Activated CD4-positive, alpha-beta T cell treated with anti-CD3 and anti-CD28 coated beads for 36 hours (primary cell): ENCODE measurements at regions of chr1 and their contacts with region 1.

Region 1: DNA sequence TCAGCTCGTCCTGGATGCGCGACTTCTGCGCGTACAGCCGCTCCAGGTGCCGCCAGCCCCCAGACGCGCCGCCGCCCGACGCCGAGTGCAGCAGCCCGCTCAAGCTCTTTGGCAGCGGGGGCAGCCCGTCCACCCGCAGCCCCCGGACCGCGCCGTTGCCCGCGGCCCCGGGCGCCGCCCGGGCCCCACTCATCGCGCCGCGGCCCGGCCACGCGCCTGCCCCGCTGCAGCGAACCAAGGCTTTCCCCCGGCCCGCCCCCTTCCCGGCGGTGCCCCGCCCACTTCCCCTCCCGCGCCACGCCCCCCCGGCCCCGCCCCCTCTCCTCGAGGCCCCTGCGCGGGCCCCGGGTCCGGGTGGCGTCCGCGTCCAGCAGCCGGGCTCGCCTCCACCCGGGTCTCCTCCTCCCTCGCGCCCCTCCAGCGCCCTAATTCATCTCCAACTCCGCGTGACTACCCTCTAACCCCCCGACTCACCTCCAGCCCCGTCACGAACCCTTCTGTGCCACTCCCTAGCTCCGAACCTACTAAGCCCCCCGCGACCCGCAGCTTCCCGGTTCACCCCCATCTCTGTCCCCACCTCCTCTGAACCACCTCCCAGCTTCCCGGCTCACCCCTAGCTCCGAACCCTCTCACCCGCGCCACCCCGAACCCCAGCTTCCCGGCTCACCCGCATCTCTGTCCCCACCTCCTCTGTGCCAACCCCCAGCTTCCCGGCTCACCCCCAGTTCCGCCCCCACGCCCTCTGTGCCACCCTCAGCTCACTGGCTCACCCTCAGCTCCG is at the start of gene FAM89A:
- DNase-seq: peak; percentile 88
- ATAC-seq: peak; percentile 76
- H3K4me3 Mint-ChIP-seq: peak within 1 kb of the TSS; percentile 75
- H3K27ac Mint-ChIP-seq: peak within 1 kb of the TSS; percentile 37
- H3K4me1 Mint-ChIP-seq: peaks cover 35% of the 10 kb centered on the region
- H3K27me3 Mint-ChIP-seq: peaks cover 4% of the 10 kb centered on the region
- total RNA-seq, gene FAM89A: 14.5 to 14.9 TPM

Region 2: DNA sequence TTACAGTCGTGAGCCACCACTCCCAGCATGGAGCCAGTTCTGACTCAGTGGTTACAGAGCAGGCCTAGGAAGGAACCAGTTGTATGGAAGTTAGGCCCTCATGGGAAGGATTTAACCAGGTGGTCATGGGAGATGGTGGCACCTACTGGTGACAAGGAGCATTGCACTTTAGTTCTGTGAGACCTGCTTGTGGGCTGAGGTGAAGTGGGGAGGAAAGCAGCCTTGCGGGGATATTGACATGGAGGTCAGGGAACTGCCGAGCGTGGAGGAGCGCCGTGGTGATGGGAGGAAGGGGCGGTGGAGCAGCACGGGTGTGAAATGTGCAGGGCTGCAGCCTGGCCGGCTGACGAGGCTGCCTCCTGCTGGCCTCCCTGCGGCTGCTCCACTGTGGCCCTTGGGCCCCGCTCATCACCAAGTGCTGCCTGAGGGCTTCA is 872.8 kb before region 1 on chr1:
- CTCF ChIA-PET with region 1: no interaction called
- POLR2A ChIA-PET with region 1: no interaction called
- intact Hi-C with region 1: no loop called
- DNase-seq: peak; percentile 59
- ATAC-seq: peak; percentile 66
- H3K4me3 Mint-ChIP-seq: no peak overlapping the region
- H3K27ac Mint-ChIP-seq: peak overlapping the region; percentile 40
- H3K4me1 Mint-ChIP-seq: peaks cover 43% of the 10 kb centered on the region
- H3K27me3 Mint-ChIP-seq: no peaks in the 10 kb centered on the region

Region 3: GRCh38 chr1:230426246-230427093 is 613.7 kb before region 1 on chr1 and contains the start of gene PGBD5:
- CTCF ChIA-PET with region 1: interaction called, 3 read pairs
- POLR2A ChIA-PET with region 1: no interaction called
- intact Hi-C with region 1: loop called in 1 of 2 experiments (anchors 2 kb)
- DNase-seq: peak; percentile 82
- ATAC-seq: peak; percentile 89
- H3K4me3 Mint-ChIP-seq: peak within 1 kb of the TSS; percentile 60
- H3K27ac Mint-ChIP-seq: no peak within 1 kb of the TSS
- H3K4me1 Mint-ChIP-seq: peaks cover 7% of the 10 kb centered on the region
- H3K27me3 Mint-ChIP-seq: peaks cover 57% of the 10 kb centered on the region
- total RNA-seq, gene PGBD5: 0.11 TPM in 1 of 2 experiments, not detected in the other

Region 4: GRCh38 chr1:230542054-230542453 is 498.2 kb before region 1 on chr1:
- CTCF ChIA-PET with region 1: no interaction called
- POLR2A ChIA-PET with region 1: no interaction called
- intact Hi-C with region 1: no loop called
- DNase-seq: peak; percentile 49
- ATAC-seq: peak; percentile 90
- H3K4me3 Mint-ChIP-seq: no peak overlapping the region
- H3K27ac Mint-ChIP-seq: no peak overlapping the region
- H3K4me1 Mint-ChIP-seq: peaks cover 2% of the 10 kb centered on the region
- H3K27me3 Mint-ChIP-seq: peaks cover 17% of the 10 kb centered on the region

Region 5: DNA sequence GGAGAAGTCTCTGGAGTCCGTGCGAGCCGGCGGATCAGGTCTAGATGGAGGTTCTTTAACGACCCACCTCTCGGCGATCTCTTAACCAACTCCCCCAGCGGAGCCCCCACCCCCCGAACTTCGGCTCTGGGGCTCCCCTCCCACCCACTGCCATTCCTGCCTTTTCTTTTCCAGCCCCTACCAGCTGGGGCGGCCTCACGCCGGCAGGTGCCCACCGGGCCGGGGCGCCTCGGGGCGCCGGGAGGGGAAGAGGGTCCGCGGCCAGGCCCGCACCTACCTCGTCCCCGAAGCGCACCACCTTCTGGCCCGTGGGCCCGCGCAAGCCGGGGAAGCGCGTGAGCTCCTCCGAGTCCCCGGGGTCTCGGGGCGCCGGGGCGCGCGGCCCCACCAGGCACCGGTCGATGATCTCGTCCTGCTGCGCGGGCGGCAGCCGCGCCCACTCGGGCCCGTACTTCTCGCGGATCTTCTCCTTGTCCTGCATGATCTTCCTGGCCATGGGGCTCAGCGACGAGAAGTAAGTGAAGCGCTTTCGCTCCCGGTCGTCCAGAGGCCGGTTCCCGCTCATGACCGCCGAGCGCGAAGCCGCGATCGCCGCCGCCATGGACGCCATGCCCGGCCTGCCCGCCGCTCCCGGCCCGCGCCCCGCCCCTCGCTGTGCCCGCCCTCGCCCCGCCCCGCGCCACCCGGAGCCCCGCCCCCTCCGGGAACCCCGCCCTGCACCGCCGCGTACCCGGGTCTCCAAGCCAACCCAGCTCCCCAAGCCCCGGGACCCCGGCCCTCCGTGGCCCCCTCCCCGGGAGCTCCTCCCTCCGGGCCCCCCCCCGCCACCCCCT is 172.1 kb before region 1 on chr1 and contains the start of gene C1orf198:
- CTCF ChIA-PET with region 1: interaction called, 3 read pairs
- POLR2A ChIA-PET with region 1: no interaction called
- intact Hi-C with region 1: loop called (anchors 1 to 5 kb)
- DNase-seq: peak; percentile 86
- ATAC-seq: peak; percentile 90
- H3K4me3 Mint-ChIP-seq: peak within 1 kb of the TSS; percentile 80
- H3K27ac Mint-ChIP-seq: peak within 1 kb of the TSS; percentile 21
- H3K4me1 Mint-ChIP-seq: peaks cover 22% of the 10 kb centered on the region
- H3K27me3 Mint-ChIP-seq: peaks cover 14% of the 10 kb centered on the region
- total RNA-seq, gene C1orf198: 5.8 to 6.9 TPM

Region 6: DNA sequence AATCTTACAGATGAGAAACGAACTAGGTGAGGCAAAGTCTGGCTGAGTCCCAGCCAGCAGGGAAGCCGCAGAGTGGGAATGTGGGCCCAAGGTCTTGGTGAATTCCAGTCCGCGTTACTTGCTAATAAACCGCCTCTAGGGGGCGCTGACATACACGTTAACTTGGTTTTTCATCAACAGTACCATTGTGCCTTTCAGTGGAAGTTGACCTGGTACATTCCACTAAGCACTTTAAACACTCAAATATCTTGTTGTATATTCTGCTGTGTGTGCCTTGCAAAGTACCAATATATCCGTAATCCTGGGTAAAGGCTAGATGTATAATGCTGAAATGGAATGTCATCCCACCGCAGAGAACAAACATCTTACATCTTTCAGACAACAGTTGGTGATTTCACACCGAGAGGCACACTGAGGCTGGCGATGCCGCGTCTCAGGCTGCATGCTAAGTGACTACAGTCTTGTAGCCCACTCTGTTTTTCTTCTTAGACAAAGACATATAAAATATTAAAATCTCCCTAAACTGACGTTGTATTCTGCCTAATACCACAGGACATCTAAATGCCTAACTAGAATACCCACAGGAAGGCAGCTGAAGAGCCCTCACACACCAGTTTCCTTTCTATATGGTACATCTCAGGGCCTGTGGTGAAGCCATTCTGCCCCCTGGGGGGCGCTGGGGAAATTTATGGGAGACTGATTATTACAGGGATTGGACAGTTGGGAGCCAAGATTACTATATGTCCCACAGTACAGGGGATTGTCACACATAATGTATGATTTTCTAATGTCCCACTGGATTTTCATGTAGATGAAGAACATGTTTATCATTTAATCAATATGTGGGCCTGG is 122.7 kb before region 1 on chr1:
- CTCF ChIA-PET with region 1: interaction called, 3 read pairs
- POLR2A ChIA-PET with region 1: no interaction called
- intact Hi-C with region 1: loop called in 1 of 2 experiments (anchors 5 kb)
- DNase-seq: peak; percentile 85
- ATAC-seq: peak; percentile 80
- H3K4me3 Mint-ChIP-seq: no peak overlapping the region
- H3K27ac Mint-ChIP-seq: no peak overlapping the region
- H3K4me1 Mint-ChIP-seq: peaks cover 7% of the 10 kb centered on the region
- H3K27me3 Mint-ChIP-seq: no peaks in the 10 kb centered on the region

Region 7: GRCh38 chr1:231211005-231211857 is 171.0 kb after region 1 on chr1:
- CTCF ChIA-PET with region 1: interaction called, 5 read pairs
- POLR2A ChIA-PET with region 1: no interaction called
- intact Hi-C with region 1: loop called in 1 of 2 experiments (anchors 1 kb)
- DNase-seq: peak; percentile 96
- ATAC-seq: peak; percentile 97
- H3K4me3 Mint-ChIP-seq: peak overlapping the region; percentile 61
- H3K27ac Mint-ChIP-seq: peak overlapping the region; percentile 79
- H3K4me1 Mint-ChIP-seq: peaks cover 8% of the 10 kb centered on the region
- H3K27me3 Mint-ChIP-seq: no peaks in the 10 kb centered on the region

Region 8: DNA sequence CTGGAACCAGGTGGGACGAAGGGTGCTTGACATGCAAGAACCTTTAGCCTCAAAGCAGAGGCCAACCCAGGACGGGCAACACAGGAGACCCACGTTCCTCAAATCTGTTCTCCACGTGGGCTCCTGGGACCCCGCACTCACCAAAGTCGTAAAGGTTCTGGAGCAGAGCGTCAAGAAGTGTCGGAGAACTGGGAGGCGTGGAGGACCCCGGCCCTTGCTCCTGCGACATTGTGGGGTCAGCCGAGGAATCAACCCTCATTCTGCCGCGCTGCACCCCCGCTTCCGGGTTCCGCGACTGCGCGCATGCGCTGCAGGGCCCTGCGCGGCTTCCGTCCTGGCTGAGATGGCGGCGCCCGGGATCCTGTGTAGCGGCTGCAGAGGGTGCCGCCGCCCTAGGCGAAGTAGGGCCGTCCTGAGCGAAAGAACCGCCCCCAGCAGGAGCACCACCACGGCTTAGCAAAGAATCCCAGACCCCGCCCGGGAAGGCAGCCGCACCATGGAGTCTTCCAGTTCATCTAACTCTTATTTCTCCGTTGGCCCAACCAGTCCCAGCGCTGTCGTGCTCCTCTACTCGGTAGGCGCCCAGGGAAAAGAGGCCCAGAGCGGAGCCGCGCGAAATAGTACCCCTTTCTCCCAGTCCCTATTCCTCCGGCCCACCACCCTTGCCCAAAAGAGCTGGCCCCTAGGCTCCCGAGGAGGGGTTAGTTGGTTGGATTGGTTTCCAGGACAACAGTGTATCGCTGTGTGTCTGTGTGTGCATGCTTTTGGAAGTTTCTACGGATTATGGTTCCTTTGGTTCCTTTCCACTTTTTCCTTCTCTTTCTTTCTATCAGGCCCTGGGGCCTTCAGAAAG is 200.9 kb after region 1 on chr1 and contains the start of gene GNPAT:
- CTCF ChIA-PET with region 1: no interaction called
- POLR2A ChIA-PET with region 1: no interaction called
- intact Hi-C with region 1: loop called in 1 of 2 experiments (anchors 1 kb)
- DNase-seq: peak; percentile 94
- ATAC-seq: peak; percentile 98
- H3K4me3 Mint-ChIP-seq: peak within 1 kb of the TSS; percentile 98
- H3K27ac Mint-ChIP-seq: peak within 1 kb of the TSS; percentile 95
- H3K4me1 Mint-ChIP-seq: peaks cover 58% of the 10 kb centered on the region
- H3K27me3 Mint-ChIP-seq: no peaks in the 10 kb centered on the region
- total RNA-seq, gene GNPAT: 58.0 to 62.0 TPM

Region 9: DNA sequence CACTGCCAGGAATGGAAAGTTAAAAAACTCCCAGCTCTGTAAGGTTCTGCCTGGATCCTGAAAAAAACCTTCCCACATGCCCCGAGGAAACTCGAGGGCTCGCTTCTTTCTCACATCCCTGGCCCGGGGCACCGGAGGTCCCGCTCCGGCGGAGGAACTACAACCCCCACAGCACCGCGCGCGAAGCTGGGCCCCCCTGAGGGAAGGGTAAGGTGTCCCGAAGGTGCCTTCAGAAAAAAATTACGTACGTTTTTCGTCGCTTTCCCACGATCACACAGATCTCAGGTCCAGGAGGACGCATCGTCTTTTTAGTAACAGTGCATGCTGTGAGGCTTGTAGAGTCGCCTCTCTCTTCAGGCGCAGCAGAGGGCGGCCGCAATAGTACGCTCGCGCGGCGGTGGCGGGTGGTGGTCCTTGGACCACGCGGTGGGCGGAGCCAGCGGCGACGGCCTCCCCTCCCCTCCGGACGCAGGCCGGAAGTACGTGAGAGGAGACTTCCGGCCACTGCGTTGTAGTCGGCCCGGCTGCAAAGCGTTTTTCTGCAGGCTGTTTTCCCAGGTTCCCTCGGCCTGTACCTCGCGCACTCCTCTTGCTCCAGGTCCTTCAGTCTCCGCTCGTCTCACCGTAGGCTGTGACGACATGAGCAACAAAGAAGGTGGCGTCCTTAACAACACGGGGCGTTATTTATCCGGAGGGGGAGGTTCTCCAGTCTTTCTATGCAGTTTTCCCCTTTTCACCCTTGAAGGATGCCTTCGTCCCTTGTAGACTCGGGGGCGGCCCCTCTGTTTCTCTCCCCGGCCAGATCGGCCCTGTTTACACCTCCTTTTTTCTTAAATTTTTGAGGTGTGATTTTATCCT is 488.2 kb after region 1 on chr1 and contains the start of gene TSNAX:
- CTCF ChIA-PET with region 1: no interaction called
- POLR2A ChIA-PET with region 1: no interaction called
- intact Hi-C with region 1: loop called in 1 of 2 experiments (anchors 1 kb)
- DNase-seq: peak; percentile 94
- ATAC-seq: peak; percentile 93
- H3K4me3 Mint-ChIP-seq: peak within 1 kb of the TSS; percentile 88
- H3K27ac Mint-ChIP-seq: peak within 1 kb of the TSS; percentile 99
- H3K4me1 Mint-ChIP-seq: peaks cover 45% of the 10 kb centered on the region
- H3K27me3 Mint-ChIP-seq: no peaks in the 10 kb centered on the region
- total RNA-seq, gene TSNAX: 36.5 to 46.7 TPM

Region 10: DNA sequence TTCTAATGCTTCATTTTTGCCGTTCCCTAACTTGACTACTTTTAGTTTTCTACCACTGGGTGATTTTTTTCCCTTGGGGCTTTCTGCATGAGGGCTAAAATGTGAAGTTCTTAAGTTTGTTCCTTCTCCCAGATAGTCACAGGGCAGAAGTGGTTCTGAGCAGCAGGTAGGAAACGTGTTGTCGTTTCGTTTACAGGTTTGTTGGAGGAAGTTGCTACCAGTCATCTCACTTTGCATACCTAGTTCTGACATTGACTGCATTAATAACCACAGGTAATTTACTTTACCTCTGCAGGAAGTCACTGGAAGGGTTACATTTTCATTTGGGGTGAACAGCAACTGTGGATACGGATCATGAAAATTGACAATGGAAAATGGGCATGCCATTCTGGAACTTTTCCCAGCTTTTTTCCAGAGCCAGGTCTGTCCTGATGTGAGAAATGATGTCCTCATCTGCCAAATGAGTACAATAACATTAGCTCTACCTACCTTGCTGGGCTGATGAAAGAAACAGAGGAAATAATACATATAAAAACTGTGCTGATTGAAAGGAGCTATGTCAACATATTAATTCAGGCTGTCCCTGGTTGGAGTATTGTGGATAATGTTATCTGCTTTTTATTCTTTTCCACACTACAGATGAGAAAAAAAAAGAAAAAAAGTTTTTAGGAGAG is 680.6 kb after region 1 on chr1:
- CTCF ChIA-PET with region 1: no interaction called
- POLR2A ChIA-PET with region 1: no interaction called
- intact Hi-C with region 1: no loop called
- DNase-seq: no peak
- ATAC-seq: no peak
- H3K4me3 Mint-ChIP-seq: no peak overlapping the region
- H3K27ac Mint-ChIP-seq: no peak overlapping the region
- H3K4me1 Mint-ChIP-seq: no peaks in the 10 kb centered on the region
- H3K27me3 Mint-ChIP-seq: no peaks in the 10 kb centered on the region